Cardiac septum (tissue), 1 donor: ENCODE measurements at regions of chr7 and their contacts with region 1.

Region 1: GRCh38 chr7:44087911-44088838 is 5.8 kb upstream of the POLM start:
- DNase-seq: peak; percentile 74

Region 2: GRCh38 chr7:44103923-44104859 is 16.0 kb after region 1 on chr7 and contains the start of gene AEBP1:
- intact Hi-C with region 1: loop called (anchors 2 kb)
- DNase-seq: no peak
- total RNA-seq, gene AEBP1: 93.1 TPM